Psoas muscle (tissue), 8 donors: ENCODE measurements at regions of chr13 and their contacts with region 1.

Region 1: GRCh38 chr13:79379274-79379673 is 26.8 kb downstream of the RBM26 start:
- DNase-seq: no peak
- ATAC-seq: no peak
- H3K4me3 ChIP-seq: no peak overlapping the region
- H3K27ac ChIP-seq: no peak overlapping the region
- H3K4me1 ChIP-seq: peaks cover 22% of the 10 kb centered on the region
- H3K27me3 ChIP-seq: no peaks in the 10 kb centered on the region
- CTCF ChIP-seq: no peak

Region 2: GRCh38 chr13:79282976-79283375 is 96.3 kb before region 1 on chr13:
- intact Hi-C with region 1: no loop called
- DNase-seq: no peak
- ATAC-seq: no peak
- H3K4me3 ChIP-seq: no peak overlapping the region
- H3K27ac ChIP-seq: no peak overlapping the region
- H3K4me1 ChIP-seq: no peaks in the 10 kb centered on the region
- H3K27me3 ChIP-seq: no peaks in the 10 kb centered on the region
- CTCF ChIP-seq: no peak

Region 3: GRCh38 chr13:79336966-79337365 is 42.3 kb before region 1 on chr13:
- intact Hi-C with region 1: loop called in 1 of 2 experiments (anchors 5 kb)
- DNase-seq: no peak
- ATAC-seq: no peak
- H3K4me3 ChIP-seq: no peak overlapping the region
- H3K27ac ChIP-seq: no peak overlapping the region
- H3K4me1 ChIP-seq: no peaks in the 10 kb centered on the region
- H3K27me3 ChIP-seq: no peaks in the 10 kb centered on the region
- CTCF ChIP-seq: no peak